Calu3 (cell line): ENCODE measurements at regions of chr9 and their contacts with region 1.

Region 1: GRCh38 chr9:32431940-32432555 is 47.6 kb downstream of the ACO1 start:
- DNase-seq: peak; percentile 43
- H3K4me3 Mint-ChIP-seq: no peak overlapping the region
- H3K27ac Mint-ChIP-seq: peak overlapping the region; percentile 35
- H3K4me1 Mint-ChIP-seq: peaks cover 23% of the 10 kb centered on the region
- H3K27me3 Mint-ChIP-seq: no peaks in the 10 kb centered on the region
- CTCF ChIP-seq: peak; percentile 57

Region 2: DNA sequence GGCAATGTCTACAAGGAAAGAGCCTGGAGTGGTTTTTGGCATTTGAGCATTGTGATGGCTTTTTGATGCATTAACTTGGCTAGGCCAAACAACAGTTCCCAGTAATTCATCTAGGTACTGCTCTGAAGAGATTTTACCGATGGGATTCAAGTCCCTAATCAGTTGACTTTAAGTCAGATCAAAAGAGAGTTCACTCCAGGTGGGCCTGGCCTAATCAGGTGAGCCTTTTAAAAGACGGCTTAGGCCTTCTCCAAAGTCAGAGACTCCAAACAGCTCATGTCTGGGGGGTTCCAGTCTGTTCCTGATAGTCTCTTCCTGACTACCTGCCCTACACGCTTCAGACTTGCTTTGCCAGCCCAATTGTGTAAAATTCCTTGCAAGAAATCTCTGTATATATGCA is 40.3 kb after region 1 on chr9:
- CTCF ChIA-PET with region 1: no interaction called
- intact Hi-C with region 1: no loop called
- DNase-seq: no peak
- H3K4me3 Mint-ChIP-seq: no peak overlapping the region
- H3K27ac Mint-ChIP-seq: no peak overlapping the region
- H3K4me1 Mint-ChIP-seq: no peaks in the 10 kb centered on the region
- H3K27me3 Mint-ChIP-seq: no peaks in the 10 kb centered on the region
- CTCF ChIP-seq: no peak

Region 3: GRCh38 chr9:32579706-32580331 is 147.8 kb after region 1 on chr9:
- CTCF ChIA-PET with region 1: no interaction called
- intact Hi-C with region 1: loop called (anchors 2 kb)
- DNase-seq: peak; percentile 69
- H3K4me3 Mint-ChIP-seq: no peak overlapping the region
- H3K27ac Mint-ChIP-seq: no peak overlapping the region
- H3K4me1 Mint-ChIP-seq: peaks cover 26% of the 10 kb centered on the region
- H3K27me3 Mint-ChIP-seq: no peaks in the 10 kb centered on the region
- CTCF ChIP-seq: peak; percentile 16